Activated naive CD4-positive, alpha-beta T cell treated with anti-CD3 and anti-CD28 coated beads for 36 hours (primary cell): ENCODE measurements at regions of chr19 and their contacts with region 1.

Region 1: GRCh38 chr19:8389891-8390616 is at the start of gene RAB11B:
- DNase-seq: peak; percentile 100
- H3K4me3 Mint-ChIP-seq: peak within 1 kb of the TSS; percentile 93
- H3K27ac Mint-ChIP-seq: peak within 1 kb of the TSS; percentile 96
- H3K4me1 Mint-ChIP-seq: peaks cover 25% of the 10 kb centered on the region
- H3K27me3 Mint-ChIP-seq: no peaks in the 10 kb centered on the region
- total RNA-seq, gene RAB11B: 61.9 to 69.6 TPM

Region 2: DNA sequence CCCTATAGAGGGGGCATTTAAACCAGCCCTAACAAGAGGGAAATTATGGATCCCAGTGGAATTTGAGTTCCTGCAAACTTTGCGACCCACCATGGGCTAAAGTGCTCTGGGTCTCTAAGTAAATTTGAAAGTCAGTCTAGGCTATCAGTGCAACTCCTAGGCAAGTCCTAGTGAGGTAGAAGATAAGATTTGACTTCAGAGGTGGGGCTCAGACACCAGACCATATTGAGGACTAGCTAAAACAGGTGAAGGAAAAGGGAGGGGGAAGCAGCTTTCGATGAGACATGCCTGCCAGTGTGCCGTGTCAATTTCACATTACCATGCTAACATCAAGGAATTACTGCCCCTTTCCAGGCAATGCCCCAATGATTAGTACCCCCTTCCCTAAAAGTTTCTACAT is 120.3 kb before region 1 on chr19:
- CTCF ChIA-PET with region 1: interaction called, 3 read pairs
- intact Hi-C with region 1: loop called (anchors 5 kb)
- DNase-seq: no peak
- H3K4me3 Mint-ChIP-seq: peak overlapping the region; percentile 78
- H3K27ac Mint-ChIP-seq: peak overlapping the region; percentile 84
- H3K4me1 Mint-ChIP-seq: peaks cover 12% of the 10 kb centered on the region
- H3K27me3 Mint-ChIP-seq: no peaks in the 10 kb centered on the region

Region 3: DNA sequence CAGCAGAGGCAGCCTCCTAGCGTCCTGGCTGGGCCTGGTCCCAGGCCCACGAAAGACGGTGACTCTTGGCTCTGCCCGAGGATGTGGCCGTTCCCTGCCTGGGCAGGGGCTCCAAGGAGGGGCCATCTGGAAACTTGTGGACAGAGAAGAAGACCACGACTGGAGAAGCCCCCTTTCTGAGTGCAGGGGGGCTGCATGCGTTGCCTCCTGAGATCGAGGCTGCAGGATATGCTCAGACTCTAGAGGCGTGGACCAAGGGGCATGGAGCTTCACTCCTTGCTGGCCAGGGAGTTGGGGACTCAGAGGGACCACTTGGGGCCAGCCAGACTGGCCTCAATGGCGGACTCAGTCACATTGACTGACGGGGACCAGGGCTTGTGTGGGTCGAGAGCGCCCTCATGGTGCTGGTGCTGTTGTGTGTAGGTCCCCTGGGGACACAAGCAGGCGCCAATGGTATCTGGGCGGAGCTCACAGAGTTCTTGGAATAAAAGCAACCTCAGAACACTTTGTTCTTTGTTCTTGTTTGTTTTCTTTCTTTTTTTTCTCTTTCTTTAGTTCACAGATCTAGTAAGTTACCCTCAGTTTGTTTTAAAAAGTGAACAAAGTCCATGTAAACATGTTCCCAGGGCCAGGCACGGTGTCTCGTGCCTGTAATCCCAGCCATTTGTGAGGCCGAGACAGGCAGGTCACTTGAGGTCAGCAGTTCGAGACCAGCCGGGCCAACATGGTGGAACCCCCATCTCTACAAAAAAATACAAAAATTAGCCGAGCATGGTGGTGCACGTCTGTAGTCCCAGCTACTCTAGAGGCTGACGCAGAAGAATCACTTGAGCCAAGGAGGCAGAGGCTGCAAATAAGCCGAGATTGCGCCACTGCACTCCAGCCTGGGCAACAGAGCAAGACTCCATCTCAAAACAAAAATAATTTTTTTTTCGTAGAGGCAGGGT is 15.9 kb before region 1 on chr19:
- CTCF ChIA-PET with region 1: no interaction called
- intact Hi-C with region 1: no loop called
- DNase-seq: no peak
- H3K4me3 Mint-ChIP-seq: no peak overlapping the region
- H3K27ac Mint-ChIP-seq: no peak overlapping the region
- H3K4me1 Mint-ChIP-seq: peaks cover 5% of the 10 kb centered on the region
- H3K27me3 Mint-ChIP-seq: no peaks in the 10 kb centered on the region

Region 4: DNA sequence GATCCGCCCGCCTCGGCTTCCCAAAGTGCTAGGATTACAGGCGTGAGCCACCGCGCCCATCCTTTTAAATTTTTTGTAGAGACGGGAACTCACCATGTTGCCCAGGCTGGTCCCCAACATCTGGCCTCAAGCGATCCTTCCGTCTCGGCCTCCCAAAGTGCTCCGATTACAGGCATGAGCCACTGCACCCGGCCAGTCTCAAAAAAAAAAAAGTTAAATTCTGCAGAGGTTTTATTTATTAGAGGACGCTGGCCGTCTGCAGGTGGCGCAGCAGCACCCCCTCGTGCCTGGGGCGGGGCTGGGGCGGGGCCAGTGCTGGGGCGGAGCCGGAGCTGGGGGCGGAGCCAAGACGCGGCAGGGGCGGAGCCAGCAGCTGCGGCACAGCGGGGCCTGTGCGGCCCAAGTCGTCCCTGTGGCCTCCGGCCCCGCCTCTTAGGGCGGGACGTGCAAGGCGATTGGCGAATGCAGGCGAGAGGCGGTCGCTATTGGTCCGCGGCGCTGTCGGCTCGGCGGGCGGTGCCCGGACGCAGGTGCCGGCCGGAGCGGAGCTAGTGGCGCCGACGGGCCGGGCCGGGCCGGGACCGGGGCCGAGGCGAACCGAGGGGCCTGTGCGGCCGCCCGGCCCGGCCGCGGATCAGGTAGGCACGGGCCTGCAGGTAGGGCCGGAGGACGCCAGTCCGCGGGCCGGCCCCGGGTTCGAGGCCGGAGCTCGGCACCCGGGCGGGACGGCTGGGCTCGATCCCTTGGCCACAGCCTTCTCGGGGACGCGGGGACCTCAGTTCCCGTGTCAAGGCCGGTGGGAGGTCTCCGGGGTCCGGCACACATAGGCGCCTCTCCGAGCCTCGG is 23.0 kb after region 1 on chr19 and contains the start of gene MARCHF2:
- CTCF ChIA-PET with region 1: interaction called, 4 read pairs
- intact Hi-C with region 1: loop called (anchors 1 kb)
- DNase-seq: peak; percentile 95
- H3K4me3 Mint-ChIP-seq: peak within 1 kb of the TSS; percentile 56
- H3K27ac Mint-ChIP-seq: no peak within 1 kb of the TSS
- H3K4me1 Mint-ChIP-seq: peaks cover 5% of the 10 kb centered on the region
- H3K27me3 Mint-ChIP-seq: no peaks in the 10 kb centered on the region
- total RNA-seq, gene MARCHF2: 9.2 to 10.3 TPM

Region 5: DNA sequence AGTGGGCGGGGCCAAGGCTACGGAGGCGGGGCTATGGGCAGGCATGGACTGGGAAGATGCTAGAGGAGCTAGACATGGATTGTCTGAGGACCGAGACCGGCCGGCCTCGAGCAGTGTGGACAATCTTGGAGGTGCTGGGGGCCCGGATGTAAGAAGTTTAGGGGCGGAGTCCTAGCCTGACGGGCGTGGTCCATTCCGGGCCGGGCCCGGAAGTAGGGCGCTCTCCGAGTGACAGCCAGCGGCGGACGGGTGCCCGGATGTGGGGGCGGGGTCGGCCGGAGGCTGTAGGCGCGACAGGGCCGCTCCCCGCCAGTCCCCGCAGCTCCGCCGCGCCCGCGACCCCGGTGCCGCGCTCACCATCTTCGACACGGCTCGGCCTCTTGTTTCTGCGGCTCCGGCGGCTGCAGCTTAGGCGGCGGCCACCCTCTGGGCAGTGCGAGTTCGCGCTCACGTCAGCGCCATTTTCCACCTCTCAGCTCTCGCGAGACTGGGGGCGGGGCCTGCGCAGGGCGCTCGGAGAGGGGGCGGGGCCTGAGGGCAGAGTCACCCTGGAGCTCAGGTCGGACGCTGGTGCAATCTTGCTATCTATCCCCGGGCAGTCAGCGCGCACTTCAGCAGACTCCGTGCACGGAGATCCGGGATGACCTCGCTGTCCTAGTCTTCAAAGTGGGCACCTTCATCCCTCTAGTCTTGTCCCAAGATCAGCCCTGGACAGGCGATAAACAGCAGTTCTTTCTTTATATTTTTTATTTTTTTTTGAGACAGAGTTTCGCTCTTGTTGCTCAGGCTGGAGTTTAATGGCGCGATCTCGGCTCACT is 123.8 kb after region 1 on chr19 and contains the start of gene ZNF414:
- CTCF ChIA-PET with region 1: no interaction called
- intact Hi-C with region 1: loop called (anchors 1 kb)
- DNase-seq: peak; percentile 98
- H3K4me3 Mint-ChIP-seq: peak within 1 kb of the TSS; percentile 97
- H3K27ac Mint-ChIP-seq: peak within 1 kb of the TSS; percentile 97
- H3K4me1 Mint-ChIP-seq: peaks cover 47% of the 10 kb centered on the region
- H3K27me3 Mint-ChIP-seq: no peaks in the 10 kb centered on the region
- total RNA-seq, gene ZNF414: 19.8 to 24.1 TPM